ENCODE measurements at regions of chr1 and their contacts with region 1.

Region 1: DNA sequence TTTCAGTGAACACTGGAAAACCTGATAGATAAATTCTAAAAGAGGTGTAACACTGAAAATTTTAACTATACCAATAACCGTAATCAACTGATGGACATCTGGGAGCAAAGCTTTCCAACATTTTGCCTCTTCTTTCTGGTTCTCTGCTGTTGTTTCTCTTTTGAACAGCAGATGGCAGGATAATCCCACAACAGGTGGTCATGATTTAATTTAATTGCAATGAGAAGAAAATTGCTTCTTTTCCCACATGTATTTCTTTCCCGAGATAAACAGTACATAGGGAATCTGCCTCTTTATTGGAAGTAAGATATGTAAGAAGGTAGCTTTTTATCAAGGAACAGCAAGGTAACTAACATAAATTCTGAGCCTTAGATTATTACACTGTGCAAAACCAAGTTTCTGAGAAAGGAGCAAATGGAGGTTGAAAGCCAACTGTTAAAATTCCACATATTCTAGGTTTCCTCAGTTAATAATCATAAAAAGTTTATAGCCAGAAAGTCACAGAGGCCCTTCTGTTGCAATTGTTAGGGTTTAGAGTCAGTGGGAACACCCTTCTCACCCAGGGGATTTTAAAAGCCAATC is 72.9 kb downstream of the RPS6KA1 start:
- DNase-seq: peak; percentile 38
- H3K4me3 Mint-ChIP-seq: no peak overlapping the region
- H3K27ac Mint-ChIP-seq: no peak overlapping the region
- H3K4me1 Mint-ChIP-seq: peaks cover 11% of the 10 kb centered on the region
- H3K27me3 Mint-ChIP-seq: peaks cover 20% of the 10 kb centered on the region

Region 2: DNA sequence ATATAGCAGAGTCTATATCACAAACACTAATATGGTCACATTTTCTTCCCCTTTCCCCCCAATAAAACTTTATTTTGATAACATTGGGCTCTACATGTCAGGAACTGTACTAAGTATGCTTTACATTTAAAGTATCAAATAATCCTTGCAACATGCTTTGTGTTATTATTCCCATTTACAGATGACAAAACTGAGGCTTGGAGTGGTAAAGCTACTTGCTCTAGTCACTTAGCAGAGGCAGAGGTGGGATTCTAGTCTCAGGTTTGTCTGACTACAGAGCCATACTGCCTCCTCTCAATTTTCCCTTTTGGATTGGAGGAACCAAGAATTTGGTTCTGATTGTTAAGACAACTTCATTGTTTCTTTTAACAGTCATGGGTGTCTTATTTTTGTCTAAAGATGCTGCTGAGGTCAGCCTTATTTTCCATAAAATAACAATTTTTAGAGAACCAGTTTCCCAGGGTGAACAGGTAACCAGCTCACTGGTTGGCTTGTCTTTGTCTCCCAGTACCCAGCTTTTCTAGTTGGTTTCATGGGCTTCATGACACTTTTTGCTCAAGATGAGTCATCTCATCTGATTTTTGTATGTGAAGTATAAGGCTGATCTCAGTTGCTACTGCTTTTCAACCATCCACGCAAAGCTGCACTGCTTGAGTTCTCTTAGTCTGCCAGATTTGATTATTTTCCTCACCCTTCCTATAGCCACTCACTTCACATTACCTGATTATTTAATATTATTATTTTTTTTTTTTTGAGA is 12.4 kb after region 1 on chr1:
- CTCF ChIA-PET with region 1: interaction called, 13 read pairs
- POLR2A ChIA-PET with region 1: no interaction called
- DNase-seq: no peak
- H3K4me3 Mint-ChIP-seq: no peak overlapping the region
- H3K27ac Mint-ChIP-seq: no peak overlapping the region
- H3K4me1 Mint-ChIP-seq: peaks cover 9% of the 10 kb centered on the region
- H3K27me3 Mint-ChIP-seq: peaks cover 14% of the 10 kb centered on the region

Region 3: GRCh38 chr1:26723013-26723991 is 120.8 kb after region 1 on chr1:
- CTCF ChIA-PET with region 1: no interaction called
- POLR2A ChIA-PET with region 1: no interaction called
- DNase-seq: peak; percentile 38
- H3K4me3 Mint-ChIP-seq: no peak overlapping the region
- H3K27ac Mint-ChIP-seq: peak overlapping the region; percentile 12
- H3K4me1 Mint-ChIP-seq: peaks cover 78% of the 10 kb centered on the region
- H3K27me3 Mint-ChIP-seq: no peaks in the 10 kb centered on the region

Region 4: GRCh38 chr1:26833432-26834405 is 231.2 kb after region 1 on chr1:
- CTCF ChIA-PET with region 1: interaction called, 35 read pairs
- POLR2A ChIA-PET with region 1: interaction called, 3 read pairs
- DNase-seq: peak; percentile 94
- H3K4me3 Mint-ChIP-seq: peak overlapping the region; percentile 66
- H3K27ac Mint-ChIP-seq: peak overlapping the region; percentile 99
- H3K4me1 Mint-ChIP-seq: peaks cover 80% of the 10 kb centered on the region
- H3K27me3 Mint-ChIP-seq: no peaks in the 10 kb centered on the region

Measured in activated CD4-positive, alpha-beta memory T cell treated with anti-CD3 and anti-CD28 coated beads, Interleukin-2, amount 10 ng/mL, durations not matched to agents 7 days and 5 days (primary cell).